Activated CD4-positive, alpha-beta memory T cell treated with anti-CD3 and anti-CD28 coated beads for 36 hours (primary cell): ENCODE measurements at regions of chr1 and their contacts with region 1.

Region 1: DNA sequence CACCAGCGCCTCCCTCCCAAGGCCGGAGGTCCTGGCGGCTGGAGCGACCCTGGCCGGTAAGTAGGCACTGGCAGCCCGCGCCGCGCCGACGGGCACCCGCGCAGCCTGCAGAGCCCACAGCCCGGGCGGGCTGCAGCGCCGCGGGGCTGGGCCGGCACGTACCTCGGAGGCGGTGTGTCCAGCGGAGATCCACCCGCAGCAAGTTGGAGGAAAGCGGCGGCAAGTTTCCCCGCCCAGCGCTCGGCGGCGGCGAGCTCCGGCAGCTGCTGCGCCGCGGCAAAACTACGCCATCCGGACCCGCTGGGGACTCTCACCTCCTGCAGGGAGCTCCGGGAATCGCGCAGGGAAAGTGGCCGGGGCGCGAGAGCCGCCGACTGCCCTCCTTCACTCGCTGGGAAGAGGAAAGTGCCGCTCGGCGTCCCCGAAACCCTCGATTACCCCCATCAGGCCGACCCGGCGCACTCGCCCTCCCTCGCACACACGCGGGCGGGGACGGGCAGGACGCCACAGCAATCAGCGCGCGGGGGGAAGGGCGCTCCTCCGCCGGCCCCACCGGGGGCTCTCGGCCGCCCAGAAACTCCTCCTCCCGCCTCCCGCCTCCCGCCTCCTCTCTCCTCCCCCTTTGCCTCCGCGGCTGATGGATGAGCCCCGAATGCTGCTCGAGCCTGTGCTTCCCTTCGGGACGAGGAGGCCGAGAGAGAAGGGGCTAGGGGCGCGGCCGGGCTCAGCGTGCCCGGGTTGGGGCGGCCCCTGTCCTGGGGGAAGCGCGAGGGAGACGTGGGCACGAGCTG is at the start of gene TGFBR3:
- DNase-seq: peak; percentile 74
- H3K4me3 Mint-ChIP-seq: peak within 1 kb of the TSS; percentile 92
- H3K27ac Mint-ChIP-seq: peak within 1 kb of the TSS; percentile 69
- H3K4me1 Mint-ChIP-seq: peaks cover 41% of the 10 kb centered on the region
- H3K27me3 Mint-ChIP-seq: peaks cover 6% of the 10 kb centered on the region
- total RNA-seq, gene TGFBR3: 4.5 to 4.9 TPM

Region 2: DNA sequence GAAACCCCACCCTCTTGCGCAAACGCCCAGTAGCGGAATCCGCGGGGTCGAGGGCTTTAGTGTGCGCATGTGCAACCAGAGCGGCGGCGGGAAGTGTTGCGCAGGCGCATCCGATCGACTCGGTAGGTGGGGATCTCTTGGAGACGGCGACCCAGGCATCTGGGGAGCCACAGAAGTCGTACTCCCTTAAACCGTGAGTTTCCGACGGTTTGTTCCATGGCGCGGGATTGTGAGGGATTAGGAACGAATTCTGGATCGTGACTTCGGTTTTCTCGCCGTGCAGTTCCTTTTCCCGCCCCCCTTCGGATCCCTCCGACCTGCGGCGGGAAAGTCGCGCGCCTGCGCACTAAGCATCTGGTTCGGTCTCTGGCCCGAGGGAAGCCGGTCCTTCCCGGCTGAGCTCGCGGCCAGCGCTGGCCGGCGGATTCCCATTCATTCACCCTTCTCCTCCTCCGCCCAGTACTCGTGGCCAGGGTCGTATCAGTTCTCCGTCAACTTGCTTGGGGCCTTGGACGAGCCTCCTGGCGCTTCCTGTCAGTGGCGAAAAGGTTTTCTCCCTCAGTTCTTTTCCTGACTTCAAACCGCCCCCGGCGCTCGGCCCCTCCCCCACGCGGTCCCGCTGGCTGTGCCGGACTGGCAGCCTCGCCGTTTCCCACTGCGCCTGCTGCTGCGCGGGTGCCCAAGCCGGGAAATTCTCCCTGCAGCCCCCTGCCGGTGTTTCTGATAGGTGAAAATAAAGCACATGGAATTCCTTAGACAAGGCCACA is 385.0 kb before region 1 on chr1 and contains the start of gene CDC7:
- CTCF ChIA-PET with region 1: no interaction called
- POLR2A ChIA-PET with region 1: no interaction called
- intact Hi-C with region 1: loop called (anchors 2 kb)
- DNase-seq: peak; percentile 88
- H3K4me3 Mint-ChIP-seq: no peak within 1 kb of the TSS
- H3K27ac Mint-ChIP-seq: no peak within 1 kb of the TSS
- H3K4me1 Mint-ChIP-seq: peaks cover 16% of the 10 kb centered on the region
- H3K27me3 Mint-ChIP-seq: no peaks in the 10 kb centered on the region
- total RNA-seq, gene CDC7: 20.2 to 20.4 TPM

Region 3: GRCh38 chr1:91830242-91831131 is 55.4 kb before region 1 on chr1:
- CTCF ChIA-PET with region 1: no interaction called
- POLR2A ChIA-PET with region 1: no interaction called
- intact Hi-C with region 1: no loop called
- DNase-seq: no peak
- H3K4me3 Mint-ChIP-seq: no peak overlapping the region
- H3K27ac Mint-ChIP-seq: no peak overlapping the region
- H3K4me1 Mint-ChIP-seq: peaks cover 21% of the 10 kb centered on the region
- H3K27me3 Mint-ChIP-seq: no peaks in the 10 kb centered on the region

Region 4: DNA sequence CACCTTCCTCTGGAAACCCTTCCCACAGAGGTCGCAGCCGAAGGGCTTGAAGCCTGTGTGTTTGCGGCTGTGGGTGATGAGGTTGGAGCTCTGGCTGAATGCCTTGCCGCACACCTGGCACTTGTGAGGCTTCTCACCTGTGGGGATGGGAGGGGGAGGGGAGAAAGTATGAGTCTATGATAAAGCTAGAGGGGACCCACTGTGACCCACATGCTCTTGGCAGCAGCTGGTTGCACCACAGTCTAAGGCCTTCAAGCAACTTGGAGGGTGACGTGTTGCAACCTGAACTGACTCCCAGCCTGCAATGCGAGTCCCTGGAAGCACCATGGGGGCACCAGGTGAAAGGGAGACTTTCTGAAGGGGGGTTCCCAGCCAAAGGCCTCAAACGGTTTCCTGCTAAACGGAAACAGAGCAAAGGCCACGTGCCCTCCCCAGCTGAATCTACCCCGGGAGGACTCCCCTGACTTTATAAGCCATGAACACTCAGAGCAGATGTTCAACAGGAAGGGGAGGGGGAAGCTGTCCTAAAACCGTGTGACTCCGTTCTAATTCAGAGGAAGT is 590.2 kb after region 1 on chr1:
- CTCF ChIA-PET with region 1: no interaction called
- POLR2A ChIA-PET with region 1: no interaction called
- intact Hi-C with region 1: no loop called
- DNase-seq: peak; percentile 85
- H3K4me3 Mint-ChIP-seq: peak overlapping the region; percentile 54
- H3K27ac Mint-ChIP-seq: peak overlapping the region; percentile 86
- H3K4me1 Mint-ChIP-seq: peaks cover 87% of the 10 kb centered on the region
- H3K27me3 Mint-ChIP-seq: no peaks in the 10 kb centered on the region